PC-3 (cell line): ENCODE measurements at regions of chr3 and their contacts with region 1.

Region 1: GRCh38 chr3:38190481-38190881 is 25.1 kb downstream of the OXSR1 start:
- DNase-seq: no peak
- ATAC-seq: no peak
- H3K4me3 ChIP-seq: no peak overlapping the region
- H3K27ac ChIP-seq: no peak overlapping the region
- H3K4me1 ChIP-seq: no peaks in the 10 kb centered on the region
- H3K27me3 ChIP-seq: no peaks in the 10 kb centered on the region
- CTCF ChIP-seq: no peak

Region 2: DNA sequence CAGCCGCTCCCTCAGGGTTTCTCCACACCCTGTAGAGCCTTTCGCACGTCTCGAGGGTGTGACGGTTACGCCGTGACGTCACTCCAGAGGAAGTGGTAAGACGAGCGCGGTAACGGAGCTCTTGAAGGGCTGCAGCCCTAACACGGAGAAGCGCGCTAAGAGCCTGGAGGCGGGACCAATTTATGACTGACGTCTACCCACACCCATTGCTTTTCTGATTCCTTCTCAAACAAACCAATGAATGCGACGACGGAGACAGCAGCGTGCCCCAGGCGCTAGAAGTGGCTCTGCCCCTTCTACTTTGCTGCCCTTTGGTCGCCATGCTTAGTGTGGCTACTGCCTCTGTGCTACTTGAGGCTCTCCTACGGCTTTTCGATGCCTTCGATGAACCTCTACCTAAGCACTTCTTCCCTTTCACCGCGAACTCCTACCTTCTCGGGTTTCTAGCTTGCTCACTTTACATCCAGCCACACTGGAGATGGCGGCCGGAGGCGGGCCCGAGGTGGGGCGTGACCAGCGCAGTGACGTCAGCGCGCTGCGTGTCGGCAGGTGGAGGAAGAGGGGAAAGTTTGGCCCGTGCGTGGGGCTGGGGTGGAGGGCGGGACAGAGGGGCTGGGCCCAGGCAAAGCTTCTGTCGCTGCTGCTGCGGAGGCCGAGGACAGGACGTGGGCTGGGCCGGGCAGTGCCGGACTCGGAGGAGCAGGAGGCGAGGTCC is 25.4 kb before region 1 on chr3 and contains the start of gene OXSR1:
- CTCF ChIA-PET with region 1: interaction called, 5 read pairs
- POLR2A ChIA-PET with region 1: interaction called, 12 read pairs
- intact Hi-C with region 1: no loop called
- DNase-seq: peak; percentile 100
- ATAC-seq: peak; percentile 84
- H3K4me3 ChIP-seq: peak within 1 kb of the TSS; percentile 94
- H3K27ac ChIP-seq: peak within 1 kb of the TSS; percentile 97
- H3K4me1 ChIP-seq: peaks cover 44% of the 10 kb centered on the region
- H3K27me3 ChIP-seq: no peaks in the 10 kb centered on the region
- CTCF ChIP-seq: no peak
- total RNA-seq, gene OXSR1: 42.2 and 47.7 TPM in 2 replicates

Region 3: GRCh38 chr3:38224357-38224756 is 33.9 kb after region 1 on chr3:
- CTCF ChIA-PET with region 1: no interaction called
- POLR2A ChIA-PET with region 1: no interaction called
- intact Hi-C with region 1: loop called (anchors 2 kb)
- DNase-seq: peak; percentile 50
- ATAC-seq: no peak; the same call in 1 of the 2 replicates
- H3K4me3 ChIP-seq: no peak overlapping the region
- H3K27ac ChIP-seq: no peak overlapping the region
- H3K4me1 ChIP-seq: peaks cover 46% of the 10 kb centered on the region
- H3K27me3 ChIP-seq: no peaks in the 10 kb centered on the region
- CTCF ChIP-seq: no peak

Region 4: GRCh38 chr3:38297947-38298711 is 107.6 kb after region 1 on chr3:
- CTCF ChIA-PET with region 1: interaction called, 21 read pairs
- POLR2A ChIA-PET with region 1: no interaction called
- intact Hi-C with region 1: no loop called
- DNase-seq: peak; percentile 50
- ATAC-seq: peak; percentile 92
- H3K4me3 ChIP-seq: no peak overlapping the region
- H3K27ac ChIP-seq: no peak overlapping the region
- H3K4me1 ChIP-seq: no peaks in the 10 kb centered on the region
- H3K27me3 ChIP-seq: no peaks in the 10 kb centered on the region
- CTCF ChIP-seq: peak; percentile 82